ENCODE measurements at regions of chr17 and their contacts with region 1.

Region 1: GRCh38 chr17:75114552-75115314 is 5.0 kb downstream of the ARMC7 start:
- DNase-seq: no peak

Region 2: GRCh38 chr17:75173526-75173925 is 58.8 kb after region 1 on chr17:
- intact Hi-C with region 1: loop called (anchors 5 kb)
- DNase-seq: no peak